PC-3 (cell line): ENCODE measurements at regions of chr3 and their contacts with region 1.

Region 1: DNA sequence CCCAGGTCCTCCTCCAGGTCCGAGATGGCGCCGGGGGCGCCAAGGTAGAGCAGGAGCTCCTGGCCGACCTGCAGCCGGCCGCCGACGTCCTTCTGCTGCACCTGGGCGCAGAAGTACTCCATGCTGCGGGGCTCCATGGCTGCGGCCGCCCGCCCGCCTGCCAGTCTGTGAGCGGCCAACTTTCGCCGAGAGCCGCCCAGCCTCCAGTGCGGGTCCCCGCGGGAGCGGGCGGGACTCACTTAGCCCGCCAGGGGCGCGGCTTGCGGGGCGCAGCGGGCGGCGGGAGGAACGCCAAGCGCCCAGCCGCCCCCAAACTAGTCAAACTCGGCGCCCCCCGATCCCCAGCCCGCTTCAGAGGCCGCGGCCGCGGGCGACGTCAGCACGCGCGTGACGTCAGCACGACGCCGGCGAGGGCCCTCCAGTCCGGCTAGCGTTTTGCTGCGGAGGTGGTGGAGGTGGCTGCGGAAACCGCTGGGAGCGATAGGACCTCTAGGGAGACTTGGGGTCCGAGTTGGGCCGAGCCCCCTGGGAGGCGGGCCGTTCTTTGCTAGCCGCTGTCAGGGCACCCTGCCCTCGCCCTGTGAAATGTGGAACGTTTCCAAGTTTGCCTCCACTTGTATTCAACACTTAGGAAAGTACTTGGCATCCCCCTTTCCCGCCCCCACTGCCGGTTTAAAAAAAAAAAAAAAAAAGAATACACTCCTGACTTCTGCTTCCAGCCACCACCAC is at the start of gene CLASP2:
- DNase-seq: peak; percentile 88
- ATAC-seq: peak; percentile 86
- H3K4me3 ChIP-seq: peak within 1 kb of the TSS; percentile 98
- H3K27ac ChIP-seq: peak within 1 kb of the TSS; percentile 64
- H3K4me1 ChIP-seq: peaks cover 12% of the 10 kb centered on the region
- H3K27me3 ChIP-seq: no peaks in the 10 kb centered on the region
- CTCF ChIP-seq: no peak
- total RNA-seq, gene CLASP2: 84.8 and 98.7 TPM in 2 replicates

Region 2: GRCh38 chr3:33392703-33393125 is 325.3 kb before region 1 on chr3:
- CTCF ChIA-PET with region 1: no interaction called
- POLR2A ChIA-PET with region 1: no interaction called
- intact Hi-C with region 1: loop called (anchors 5 kb)
- DNase-seq: peak; percentile 97
- ATAC-seq: peak; percentile 98
- H3K4me3 ChIP-seq: no peak overlapping the region
- H3K27ac ChIP-seq: peak overlapping the region; percentile 81
- H3K4me1 ChIP-seq: peaks cover 29% of the 10 kb centered on the region
- H3K27me3 ChIP-seq: no peaks in the 10 kb centered on the region
- CTCF ChIP-seq: no peak

Region 3: DNA sequence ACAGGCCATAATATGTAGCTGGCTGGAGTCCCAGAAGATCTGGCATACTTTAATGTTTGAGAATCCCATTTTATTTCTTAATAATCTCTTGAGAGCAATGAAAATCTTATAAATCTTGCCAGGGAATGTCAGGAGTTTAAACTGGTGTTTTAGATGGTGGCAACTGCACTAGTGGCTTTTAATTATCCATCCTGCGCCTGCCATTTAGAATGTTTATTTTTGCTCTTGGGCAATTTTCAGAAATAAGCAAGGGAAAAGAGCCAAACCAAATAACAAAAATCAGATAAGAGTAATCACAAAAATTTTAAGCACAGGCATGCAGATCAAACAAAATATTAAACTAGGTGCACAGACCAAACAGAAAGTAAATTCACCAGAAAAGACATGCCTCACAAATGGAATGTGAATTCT is 235.9 kb before region 1 on chr3:
- CTCF ChIA-PET with region 1: no interaction called
- POLR2A ChIA-PET with region 1: no interaction called
- intact Hi-C with region 1: no loop called
- DNase-seq: no peak
- ATAC-seq: peak; percentile 37
- H3K4me3 ChIP-seq: no peak overlapping the region
- H3K27ac ChIP-seq: no peak overlapping the region
- H3K4me1 ChIP-seq: no peaks in the 10 kb centered on the region
- H3K27me3 ChIP-seq: no peaks in the 10 kb centered on the region
- CTCF ChIP-seq: no peak

Region 4: DNA sequence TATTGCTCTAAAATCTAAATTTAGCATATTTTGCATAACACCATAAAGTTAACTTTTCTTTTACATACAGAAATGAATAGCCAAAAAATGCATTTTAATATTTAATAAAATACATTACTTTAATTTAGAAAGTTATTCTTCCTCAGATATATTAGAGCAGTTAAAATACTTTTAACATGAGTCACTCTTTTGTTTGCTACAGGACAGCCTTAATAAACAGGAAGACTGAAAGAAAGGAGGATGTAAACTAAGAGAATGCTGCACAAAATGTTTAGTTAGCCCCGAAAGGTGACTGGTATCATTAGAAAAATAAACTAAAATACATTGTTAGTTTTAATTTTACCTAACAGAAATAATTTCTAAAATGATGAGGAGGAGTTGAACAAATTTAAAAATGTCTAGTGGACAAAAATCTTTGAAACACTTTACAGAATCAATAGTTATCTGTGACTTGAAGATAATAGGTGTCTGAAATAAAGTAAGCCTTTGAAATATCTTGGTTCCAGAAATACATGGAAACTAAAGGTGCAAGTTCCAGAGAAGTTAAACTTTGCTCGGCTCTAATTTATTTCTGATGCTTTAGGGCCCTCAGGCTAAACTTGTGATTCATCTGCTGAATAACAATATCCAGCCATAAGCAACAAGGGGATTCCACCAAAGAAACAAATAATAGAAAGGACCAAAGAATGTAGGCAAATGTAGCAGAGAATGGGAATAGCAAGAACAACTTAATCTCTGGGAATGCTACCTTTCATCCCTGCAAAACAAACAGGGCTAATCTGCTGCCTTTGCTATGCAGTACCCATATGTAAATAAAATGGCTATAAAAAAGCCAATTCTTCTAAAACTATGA is 139.5 kb before region 1 on chr3:
- CTCF ChIA-PET with region 1: no interaction called
- POLR2A ChIA-PET with region 1: no interaction called
- intact Hi-C with region 1: loop called (anchors 5 kb)
- DNase-seq: peak; percentile 90
- ATAC-seq: peak; percentile 66
- H3K4me3 ChIP-seq: peak overlapping the region; percentile 51
- H3K27ac ChIP-seq: peak overlapping the region; percentile 99
- H3K4me1 ChIP-seq: peaks cover 62% of the 10 kb centered on the region
- H3K27me3 ChIP-seq: no peaks in the 10 kb centered on the region
- CTCF ChIP-seq: no peak

Region 5: DNA sequence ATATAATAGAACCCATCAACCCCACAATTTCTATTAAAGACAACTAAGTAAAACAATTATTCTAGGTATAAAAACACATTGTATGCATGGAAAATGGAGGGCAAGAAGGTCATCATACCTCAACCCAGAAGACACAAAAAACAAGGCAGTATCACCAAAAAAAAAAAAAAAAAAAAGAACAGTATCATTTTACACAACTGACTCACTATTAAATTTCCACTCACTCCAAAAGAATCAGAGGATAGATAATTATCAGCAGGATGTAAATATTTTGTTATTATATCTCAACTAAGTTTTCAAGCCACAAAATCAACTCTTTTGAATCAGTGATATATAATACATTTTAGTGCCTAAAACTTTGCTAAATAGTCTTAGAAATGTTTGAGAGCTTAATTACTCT is 55.0 kb before region 1 on chr3:
- CTCF ChIA-PET with region 1: no interaction called
- POLR2A ChIA-PET with region 1: no interaction called
- intact Hi-C with region 1: loop called (anchors 2 kb)
- DNase-seq: peak; percentile 47
- ATAC-seq: peak; percentile 21; the same call in 1 of the 2 replicates
- H3K4me3 ChIP-seq: peak overlapping the region; percentile 21; the same call in 1 of the 2 replicates
- H3K27ac ChIP-seq: peak overlapping the region; percentile 46
- H3K4me1 ChIP-seq: peaks cover 29% of the 10 kb centered on the region
- H3K27me3 ChIP-seq: no peaks in the 10 kb centered on the region
- CTCF ChIP-seq: no peak